ENCODE measurements at regions of chr1 and their contacts with region 1.

Region 1: DNA sequence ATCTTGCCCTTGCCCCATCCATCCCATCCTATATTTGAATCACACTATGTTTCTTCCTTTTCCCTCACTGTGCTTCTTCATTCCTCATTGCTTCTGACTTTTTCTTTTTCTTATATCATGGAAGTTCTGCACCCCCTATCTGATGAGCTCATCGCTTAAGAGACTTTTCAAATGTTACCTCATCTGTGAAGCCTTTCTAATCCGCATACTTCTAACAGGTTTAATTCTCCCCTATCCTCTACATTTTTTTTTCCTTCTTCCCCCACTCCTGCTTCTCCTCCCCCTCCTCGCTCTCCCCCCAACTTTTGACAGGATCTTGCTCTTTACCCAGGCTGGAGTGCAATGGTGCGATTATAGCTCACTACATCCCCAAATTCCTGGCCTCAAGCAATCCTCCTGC is 39.5 kb downstream of the OSBPL9 start:
- DNase-seq: no peak
- ATAC-seq: no peak
- H3K4me3 ChIP-seq: no peak overlapping the region
- H3K27ac ChIP-seq: no peak overlapping the region
- H3K4me1 ChIP-seq: peaks cover 15% of the 10 kb centered on the region
- H3K27me3 ChIP-seq: no peaks in the 10 kb centered on the region
- CTCF ChIP-seq: no peak

Region 2: DNA sequence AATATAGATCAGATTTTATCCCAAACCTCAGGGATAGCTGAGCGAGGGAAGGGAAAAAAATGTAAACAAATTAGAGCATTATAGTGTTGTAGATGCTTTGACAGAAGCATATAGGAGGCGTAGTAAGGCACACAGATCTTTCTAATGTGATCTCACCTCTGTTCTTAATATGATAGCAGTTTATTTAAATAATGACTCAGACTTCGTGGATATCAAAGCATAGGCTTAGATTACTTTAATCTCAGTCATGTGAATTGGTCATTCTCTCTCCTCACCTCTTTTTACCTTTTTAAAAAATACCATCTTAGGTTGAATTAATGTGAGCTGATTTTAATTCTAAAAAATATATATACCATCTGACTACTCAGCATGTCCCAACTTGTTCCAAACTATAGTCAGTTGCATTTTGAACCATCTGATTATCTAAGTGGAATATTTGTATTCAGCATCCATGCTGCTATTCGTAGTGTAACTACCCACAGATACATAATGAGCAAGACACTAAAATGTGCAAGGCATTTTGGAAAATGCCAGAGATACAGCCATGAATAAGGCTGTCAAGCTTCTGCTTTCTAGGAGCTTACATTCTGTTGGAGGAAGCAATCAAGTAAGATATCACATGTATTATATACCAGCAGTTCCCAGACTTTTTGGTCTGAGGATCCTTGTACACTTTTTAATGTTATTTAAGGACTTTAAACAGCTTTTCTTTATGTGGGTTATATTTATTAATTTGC is 37.2 kb after region 1 on chr1:
- CTCF ChIA-PET with region 1: interaction called, 15 read pairs
- POLR2A ChIA-PET with region 1: no interaction called
- in situ Hi-C with region 1: no loop called
- intact Hi-C with region 1: no loop called
- DNase-seq: no peak
- ATAC-seq: no peak
- H3K4me3 ChIP-seq: no peak overlapping the region
- H3K27ac ChIP-seq: peak overlapping the region; percentile 35
- H3K4me1 ChIP-seq: peaks cover 24% of the 10 kb centered on the region
- H3K27me3 ChIP-seq: no peaks in the 10 kb centered on the region
- CTCF ChIP-seq: no peak

Region 3: GRCh38 chr1:51727366-51727765 is 71.0 kb after region 1 on chr1:
- CTCF ChIA-PET with region 1: interaction called, 11 read pairs
- POLR2A ChIA-PET with region 1: no interaction called
- in situ Hi-C with region 1: no loop called
- intact Hi-C with region 1: no loop called
- DNase-seq: no peak
- ATAC-seq: no peak
- H3K4me3 ChIP-seq: no peak overlapping the region
- H3K27ac ChIP-seq: no peak overlapping the region
- H3K4me1 ChIP-seq: peaks cover 20% of the 10 kb centered on the region
- H3K27me3 ChIP-seq: no peaks in the 10 kb centered on the region
- CTCF ChIP-seq: no peak

Measured in Panc1 (cell line).